PC-3 (cell line): ENCODE measurements at regions of chr11 and their contacts with region 1.

Region 1: DNA sequence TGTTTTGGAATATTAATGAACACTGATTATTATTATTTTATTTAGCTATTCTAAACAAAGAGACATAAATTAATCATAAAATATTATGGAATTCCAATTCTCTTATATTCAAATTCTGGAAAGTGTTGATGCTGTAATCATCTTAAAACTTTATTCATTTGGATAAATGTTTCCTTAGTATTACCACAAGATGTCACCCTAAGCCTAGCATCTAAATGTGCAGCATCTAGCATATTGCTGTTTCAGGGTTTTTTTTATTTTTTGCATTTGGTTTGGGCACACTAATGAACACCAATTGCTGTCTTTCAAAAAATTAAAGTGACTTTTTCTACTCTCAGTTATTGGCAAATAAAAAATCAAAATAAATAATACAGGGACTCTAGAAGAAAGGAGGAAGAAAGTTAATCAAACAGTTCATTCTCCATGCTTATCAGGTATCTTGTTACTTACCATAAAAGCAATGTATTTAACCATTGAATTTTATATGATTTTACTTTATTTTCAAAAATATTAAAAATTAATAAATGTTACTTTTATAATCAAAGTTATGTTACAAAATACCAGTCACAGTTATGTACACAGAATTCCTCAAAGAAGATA is 31.8 kb downstream of the DLG2 start:
- DNase-seq: peak; percentile 74
- ATAC-seq: peak; percentile 58
- H3K4me3 ChIP-seq: no peak overlapping the region
- H3K27ac ChIP-seq: no peak overlapping the region
- H3K4me1 ChIP-seq: no peaks in the 10 kb centered on the region
- H3K27me3 ChIP-seq: no peaks in the 10 kb centered on the region
- CTCF ChIP-seq: peak; percentile 89

Region 2: GRCh38 chr11:83836883-83837654 is 1758.3 kb before region 1 on chr11:
- CTCF ChIA-PET with region 1: no interaction called
- POLR2A ChIA-PET with region 1: no interaction called
- intact Hi-C with region 1: loop called (anchors 5 kb)
- DNase-seq: peak; percentile 58
- ATAC-seq: peak; percentile 94
- H3K4me3 ChIP-seq: no peak overlapping the region
- H3K27ac ChIP-seq: no peak overlapping the region
- H3K4me1 ChIP-seq: no peaks in the 10 kb centered on the region
- H3K27me3 ChIP-seq: peaks cover 46% of the 10 kb centered on the region
- CTCF ChIP-seq: peak; percentile 87

Region 3: GRCh38 chr11:84780689-84781293 is 814.6 kb before region 1 on chr11:
- CTCF ChIA-PET with region 1: interaction called, 7 read pairs
- POLR2A ChIA-PET with region 1: no interaction called
- intact Hi-C with region 1: loop called (anchors 1 kb)
- DNase-seq: peak; percentile 74
- ATAC-seq: peak; percentile 71
- H3K4me3 ChIP-seq: no peak overlapping the region
- H3K27ac ChIP-seq: no peak overlapping the region
- H3K4me1 ChIP-seq: no peaks in the 10 kb centered on the region
- H3K27me3 ChIP-seq: peaks cover 22% of the 10 kb centered on the region; the same call in 1 of the 2 replicates
- CTCF ChIP-seq: peak; percentile 81

Region 4: GRCh38 chr11:85182441-85183387 is 412.7 kb before region 1 on chr11:
- CTCF ChIA-PET with region 1: no interaction called
- POLR2A ChIA-PET with region 1: no interaction called
- intact Hi-C with region 1: loop called (anchors 2 kb)
- DNase-seq: peak; percentile 75
- ATAC-seq: peak; percentile 64; the same call in 1 of the 2 replicates
- H3K4me3 ChIP-seq: no peak overlapping the region
- H3K27ac ChIP-seq: no peak overlapping the region
- H3K4me1 ChIP-seq: no peaks in the 10 kb centered on the region
- H3K27me3 ChIP-seq: no peaks in the 10 kb centered on the region
- CTCF ChIP-seq: peak; percentile 76

Region 5: DNA sequence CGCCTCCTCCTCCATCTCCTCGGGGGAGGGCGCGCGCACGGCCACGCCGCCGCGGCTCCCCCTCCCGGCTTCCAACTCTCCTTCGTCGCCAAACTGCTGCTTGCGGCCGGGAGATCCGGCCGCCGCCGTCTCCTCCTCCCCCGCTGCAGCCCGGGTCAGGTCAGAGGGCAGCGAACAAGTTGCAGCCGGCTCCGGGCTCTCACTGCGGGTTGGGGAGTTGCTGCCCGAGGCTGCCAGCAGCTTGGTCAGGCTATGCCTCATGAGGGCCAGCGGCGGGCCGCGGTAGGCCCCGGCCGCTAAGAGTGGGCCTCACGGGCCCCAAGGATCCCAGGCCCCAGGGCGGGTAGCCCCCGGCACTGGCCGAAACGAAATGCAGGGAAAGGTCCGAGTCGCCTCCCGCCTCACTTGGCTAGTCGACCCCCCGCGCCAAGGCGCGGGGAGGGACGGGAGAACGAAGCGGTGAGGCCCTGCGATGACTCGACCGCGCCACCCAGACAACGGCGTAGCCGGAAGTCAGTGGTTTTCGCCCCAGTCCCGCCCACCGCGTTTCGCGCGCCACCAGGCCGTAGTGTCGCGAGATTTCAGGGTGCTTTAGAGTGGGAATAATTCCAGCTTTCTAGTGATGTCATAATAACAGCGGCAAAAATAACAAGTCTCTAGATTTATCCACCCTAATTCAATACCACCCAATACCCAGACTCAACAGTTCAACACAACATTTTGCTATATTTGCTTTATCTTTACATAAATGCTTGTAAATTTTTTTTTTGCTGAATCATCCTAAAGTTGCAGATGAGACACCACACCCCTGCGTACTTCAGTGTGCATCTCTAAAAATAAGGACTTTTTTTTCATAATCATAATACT is 69.5 kb after region 1 on chr11 and contains the start of gene CREBZF:
- CTCF ChIA-PET with region 1: interaction called, 4 read pairs
- POLR2A ChIA-PET with region 1: no interaction called
- intact Hi-C with region 1: loop called (anchors 5 kb)
- DNase-seq: peak; percentile 98
- ATAC-seq: peak; percentile 89
- H3K4me3 ChIP-seq: peak within 1 kb of the TSS; percentile 98
- H3K27ac ChIP-seq: peak within 1 kb of the TSS; percentile 91
- H3K4me1 ChIP-seq: peaks cover 23% of the 10 kb centered on the region
- H3K27me3 ChIP-seq: no peaks in the 10 kb centered on the region
- CTCF ChIP-seq: no peak
- total RNA-seq, gene CREBZF: 75.0 and 114 TPM in 2 replicates

Region 6: DNA sequence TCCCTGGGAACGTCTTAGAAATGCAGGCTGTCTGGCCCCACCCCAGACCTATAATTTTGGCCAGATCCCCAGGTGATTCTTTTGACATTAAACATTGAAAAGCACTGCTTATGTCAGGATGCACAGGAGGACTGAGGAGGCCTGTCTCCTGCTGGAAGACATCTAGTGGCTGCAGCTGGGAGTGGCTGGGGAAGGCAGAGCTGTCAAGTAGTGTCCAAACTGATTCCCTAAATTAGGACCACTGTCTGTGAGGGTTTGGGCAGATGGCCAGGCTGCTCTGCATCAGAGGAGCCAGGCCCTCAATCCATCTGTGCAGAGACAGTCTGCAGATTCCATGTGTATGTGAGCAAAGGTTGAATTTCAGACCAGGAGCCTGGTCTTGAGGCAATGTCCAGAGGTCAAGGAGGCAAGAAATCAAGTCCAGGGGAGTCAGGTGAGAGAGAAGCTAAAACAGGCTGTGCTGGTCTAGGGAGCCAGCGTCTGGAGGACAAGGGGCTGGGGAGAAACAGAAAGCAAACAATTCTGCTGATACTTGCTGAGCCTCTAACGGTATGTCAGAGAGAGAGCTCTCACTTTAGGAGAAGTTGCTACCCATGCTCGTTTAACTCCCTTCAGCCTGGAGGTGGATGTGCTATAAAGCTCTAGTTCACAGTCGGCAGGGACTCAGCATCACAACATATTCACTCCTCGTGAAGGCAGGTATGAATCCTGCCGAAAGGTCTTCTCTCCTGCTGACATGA is 230.9 kb after region 1 on chr11:
- CTCF ChIA-PET with region 1: no interaction called
- POLR2A ChIA-PET with region 1: no interaction called
- intact Hi-C with region 1: loop called (anchors 10 kb)
- DNase-seq: peak; percentile 78
- ATAC-seq: peak; percentile 14; the same call in 1 of the 2 replicates
- H3K4me3 ChIP-seq: no peak overlapping the region
- H3K27ac ChIP-seq: peak overlapping the region; percentile 96
- H3K4me1 ChIP-seq: peaks cover 74% of the 10 kb centered on the region
- H3K27me3 ChIP-seq: no peaks in the 10 kb centered on the region
- CTCF ChIP-seq: peak; percentile 93

Region 7: DNA sequence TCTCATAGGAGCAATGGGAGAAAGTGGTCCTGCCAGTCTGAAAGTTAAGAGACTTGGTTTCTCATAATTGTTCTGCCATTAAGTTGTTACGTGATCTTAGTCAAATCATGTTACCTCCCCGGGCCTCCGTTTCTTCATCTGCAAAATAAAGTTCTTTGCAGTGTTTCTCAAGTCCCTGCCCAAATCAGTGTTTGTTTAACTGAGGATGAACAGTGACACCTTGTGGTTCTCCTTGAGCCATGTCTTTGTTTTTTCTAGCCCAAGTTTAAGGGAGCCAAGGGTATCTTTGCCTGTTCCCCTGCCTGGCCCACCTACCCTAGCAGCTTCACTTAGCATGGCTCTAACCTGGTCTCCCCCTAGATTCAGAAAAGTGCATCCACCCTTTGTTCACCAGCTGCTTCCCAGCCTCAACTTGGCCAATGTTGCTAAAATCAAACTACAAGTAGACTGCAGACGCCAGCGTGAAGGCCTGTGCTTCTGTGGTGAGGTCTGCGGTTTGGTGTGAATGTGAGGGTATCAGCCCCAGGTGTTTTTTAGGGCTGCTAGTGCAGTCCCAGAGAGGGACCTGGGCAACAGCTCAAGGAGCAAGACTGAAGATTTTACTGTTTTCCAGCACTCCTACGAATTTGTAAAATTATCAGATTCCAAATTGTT is 1324.3 kb after region 1 on chr11:
- CTCF ChIA-PET with region 1: no interaction called
- POLR2A ChIA-PET with region 1: no interaction called
- intact Hi-C with region 1: loop called (anchors 1 kb)
- DNase-seq: peak; percentile 88
- ATAC-seq: peak; percentile 48
- H3K4me3 ChIP-seq: no peak overlapping the region
- H3K27ac ChIP-seq: peak overlapping the region; percentile 29
- H3K4me1 ChIP-seq: peaks cover 35% of the 10 kb centered on the region
- H3K27me3 ChIP-seq: no peaks in the 10 kb centered on the region
- CTCF ChIP-seq: peak; percentile 94